ENCODE measurements at regions of chr18 and their contacts with region 1.

Region 1: GRCh38 chr18:71028285-71028762 is 739.5 kb downstream of the SOCS6 start:
- DNase-seq: no peak
- CTCF ChIP-seq: no peak

Region 2: DNA sequence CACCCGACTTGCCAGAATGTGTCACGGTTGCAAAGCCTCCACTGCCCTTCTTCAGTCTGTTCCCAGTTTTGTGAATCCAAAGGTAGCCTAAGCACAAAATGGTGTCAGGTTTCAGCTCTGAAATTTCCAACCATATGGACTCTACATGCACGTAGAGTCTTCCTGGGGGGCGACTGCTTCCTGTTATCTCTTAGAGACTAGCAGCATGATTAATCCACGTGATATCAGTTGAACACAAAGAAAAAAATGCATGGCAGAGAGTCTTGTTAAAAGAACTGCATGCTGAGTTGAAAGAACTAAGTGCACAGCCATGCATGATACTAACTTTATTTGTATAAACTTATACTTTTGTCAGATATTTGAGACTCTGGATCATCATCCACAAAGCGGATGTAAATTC is 335.1 kb before region 1 on chr18:
- CTCF ChIA-PET with region 1: no interaction called
- POLR2A ChIA-PET with region 1: interaction called, 10 read pairs
- DNase-seq: no peak
- CTCF ChIP-seq: no peak

Region 3: GRCh38 chr18:71049893-71050292 is 21.6 kb after region 1 on chr18:
- CTCF ChIA-PET with region 1: no interaction called
- POLR2A ChIA-PET with region 1: no interaction called
- DNase-seq: no peak
- CTCF ChIP-seq: no peak

Measured in GM10248 (cell line).